Lower leg skin (tissue), 4 donors: ENCODE measurements at regions of chr6 and their contacts with region 1.

Region 1: GRCh38 chr6:40328405-40328987 is 258.7 kb downstream of the LRFN2 start:
- DNase-seq: peak in 1 of 2 donors; percentile 15
- H3K4me3 ChIP-seq: no peak overlapping the region
- CTCF ChIP-seq: no peak
- POLR2A ChIP-seq: no peak

Region 2: GRCh38 chr6:40460380-40460779 is 131.9 kb after region 1 on chr6:
- intact Hi-C with region 1: no loop called
- DNase-seq: no peak
- H3K4me3 ChIP-seq: no peak overlapping the region
- CTCF ChIP-seq: no peak
- POLR2A ChIP-seq: no peak

Region 3: DNA sequence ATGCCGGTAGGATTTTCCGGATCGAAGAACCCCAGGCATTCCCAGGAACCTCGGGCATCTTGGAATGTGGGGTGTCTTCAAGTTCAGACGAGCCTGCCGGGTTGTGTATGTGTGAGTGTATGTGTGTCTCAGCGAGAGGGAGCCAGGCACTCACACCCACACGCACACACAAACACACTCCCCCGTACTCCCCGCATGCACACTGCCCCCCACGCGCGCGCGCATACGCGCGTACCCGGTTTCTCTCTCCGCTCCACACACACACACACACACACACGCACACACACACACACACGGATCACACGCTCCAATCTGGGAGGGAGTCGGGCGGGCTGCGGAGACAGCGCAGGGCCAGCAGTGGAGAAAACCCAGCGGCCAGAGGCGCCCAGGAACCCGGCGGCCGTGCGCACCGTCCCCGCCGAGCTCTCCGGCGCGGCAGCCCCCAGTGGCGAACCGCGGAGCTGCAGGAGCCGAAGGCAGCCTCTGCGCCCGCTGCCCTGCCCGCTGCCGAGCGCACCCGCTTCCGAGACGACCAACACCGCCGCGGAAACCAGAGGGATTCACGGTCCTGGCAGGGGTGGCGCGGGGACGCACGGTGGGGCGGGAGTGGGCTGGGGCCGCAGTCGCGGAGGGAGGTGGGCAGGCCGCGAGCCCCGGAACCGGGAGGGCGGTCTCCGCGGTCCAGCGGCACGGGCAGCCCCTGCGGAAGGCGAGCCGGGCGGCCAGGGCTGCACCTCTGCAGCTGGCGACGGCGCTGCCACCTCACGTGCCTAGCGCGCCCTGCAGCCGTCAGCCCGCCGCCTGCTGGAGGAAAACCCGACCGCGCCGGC is 259.0 kb after region 1 on chr6 and contains the start of gene LRFN2:
- intact Hi-C with region 1: loop called (anchors 5 kb)
- DNase-seq: peak; percentile 24 to 93
- H3K4me3 ChIP-seq: peak within 1 kb of the TSS; percentile 15
- CTCF ChIP-seq: no peak
- POLR2A ChIP-seq: no peak
- total RNA-seq, gene LRFN2: 0.10 TPM in 1 of 4 donors, not detected in the others